GM18951 (cell line): ENCODE measurements at regions of chr20 and their contacts with region 1.

Region 1: GRCh38 chr20:1330075-1330830 is 1.3 kb upstream of the SDCBP2 start:
- POLR2A ChIP-seq: no peak

Region 2: GRCh38 chr20:1440024-1440423 is 109.8 kb after region 1 on chr20:
- in situ Hi-C with region 1: loop called (anchors 10 kb)
- POLR2A ChIP-seq: no peak

Region 3: DNA sequence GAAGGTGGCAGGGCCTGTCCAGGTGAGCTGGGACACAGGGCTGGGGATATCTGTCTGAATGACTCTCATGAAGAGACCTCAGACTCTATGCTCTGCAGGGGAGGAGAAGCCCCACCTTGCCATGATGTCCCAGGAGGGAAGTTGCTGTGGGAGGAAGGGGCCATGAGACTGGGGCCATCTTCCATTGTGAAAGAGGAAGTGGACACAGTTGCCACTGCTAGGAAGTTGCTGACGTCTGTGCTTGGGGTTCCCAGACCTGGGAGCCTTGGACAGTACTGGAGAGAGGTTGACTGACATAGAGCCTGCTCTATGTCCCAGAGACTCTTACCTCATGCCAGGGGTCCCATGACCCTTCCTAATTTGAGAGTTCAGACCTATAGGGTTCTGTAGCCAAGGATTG is 265.1 kb after region 1 on chr20:
- in situ Hi-C with region 1: no loop called
- POLR2A ChIP-seq: no peak